ENCODE measurements at regions of chr14 and their contacts with region 1.

Region 1: GRCh38 chr14:87149583-87150354 is 843.2 kb downstream of the GALC start:
- DNase-seq: no peak
- ATAC-seq: no peak
- H3K4me3 ChIP-seq: no peak overlapping the region
- H3K27ac ChIP-seq: no peak overlapping the region
- H3K4me1 ChIP-seq: no peaks in the 10 kb centered on the region
- H3K27me3 ChIP-seq: no peaks in the 10 kb centered on the region
- CTCF ChIP-seq: no peak

Region 2: DNA sequence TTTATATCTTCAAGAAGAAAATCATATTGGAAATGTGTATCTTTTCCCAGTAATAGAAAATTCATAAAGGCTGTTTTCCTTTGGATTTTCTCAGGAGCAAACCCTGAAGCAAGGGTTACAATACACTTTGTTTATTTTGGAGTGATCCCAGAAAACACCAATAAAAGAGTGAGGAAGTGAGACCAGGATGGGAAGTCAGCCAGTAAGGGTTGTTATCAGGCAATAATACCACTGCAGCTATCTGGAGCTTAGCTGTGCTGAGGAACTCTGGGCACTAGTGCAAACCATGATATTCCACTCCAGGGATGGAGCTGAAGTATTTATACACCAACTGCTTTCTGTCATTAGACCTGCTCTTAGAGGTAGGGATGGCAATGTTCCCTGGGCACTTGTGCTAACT is 617.5 kb before region 1 on chr14:
- intact Hi-C with region 1: loop called in 1 of 10 experiments (anchors 10 kb)
- DNase-seq: no peak
- ATAC-seq: no peak
- H3K4me3 ChIP-seq: no peak overlapping the region
- H3K27ac ChIP-seq: no peak overlapping the region
- H3K4me1 ChIP-seq: no peaks in the 10 kb centered on the region
- H3K27me3 ChIP-seq: no peaks in the 10 kb centered on the region
- CTCF ChIP-seq: no peak

Region 3: GRCh38 chr14:86989285-86989684 is 160.5 kb before region 1 on chr14:
- intact Hi-C with region 1: no loop called
- DNase-seq: no peak
- ATAC-seq: no peak
- H3K4me3 ChIP-seq: no peak overlapping the region
- H3K27ac ChIP-seq: no peak overlapping the region
- H3K4me1 ChIP-seq: no peaks in the 10 kb centered on the region
- H3K27me3 ChIP-seq: no peaks in the 10 kb centered on the region
- CTCF ChIP-seq: no peak

Measured in heart right ventricle (tissue), 16 donors.